Activated CD4-positive, alpha-beta memory T cell treated with anti-CD3 and anti-CD28 coated beads, Interleukin-2, amount 10 ng/mL, durations not matched to agents 7 days and 5 days (primary cell): ENCODE measurements at regions of chr22 and their contacts with region 1.

Region 1: GRCh38 chr22:25048659-25049647 is 96.4 kb downstream of the KIAA1671 start:
- DNase-seq: peak; percentile 82
- H3K4me3 Mint-ChIP-seq: no peak overlapping the region
- H3K27ac Mint-ChIP-seq: no peak overlapping the region
- H3K4me1 Mint-ChIP-seq: peaks cover 20% of the 10 kb centered on the region
- H3K27me3 Mint-ChIP-seq: peaks cover 3% of the 10 kb centered on the region

Region 2: GRCh38 chr22:24938741-24939341 is 110.1 kb before region 1 on chr22:
- CTCF ChIA-PET with region 1: interaction called, 63 read pairs
- POLR2A ChIA-PET with region 1: interaction called, 3 read pairs
- DNase-seq: peak; percentile 35
- H3K4me3 Mint-ChIP-seq: no peak overlapping the region
- H3K27ac Mint-ChIP-seq: no peak overlapping the region
- H3K4me1 Mint-ChIP-seq: no peaks in the 10 kb centered on the region
- H3K27me3 Mint-ChIP-seq: peaks cover 12% of the 10 kb centered on the region

Region 3: DNA sequence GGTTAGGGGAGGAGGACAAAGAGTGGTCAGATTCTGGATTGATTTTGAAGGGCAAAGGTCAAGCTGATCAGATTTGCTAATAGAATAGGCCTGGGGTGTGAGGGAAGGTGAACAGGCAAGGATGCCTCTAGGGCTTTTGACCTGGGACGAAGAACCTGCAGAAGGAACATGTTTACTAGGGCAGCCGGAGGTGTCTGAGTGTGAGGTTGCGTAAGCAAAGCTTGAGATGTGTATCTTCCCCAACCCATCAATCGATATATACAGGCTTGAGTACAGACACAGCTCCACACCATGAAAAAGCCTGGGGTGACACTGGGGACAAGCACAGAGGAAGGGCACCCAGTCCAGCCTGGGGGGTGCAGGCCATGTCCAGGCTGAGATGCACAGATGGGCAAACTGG is 103.5 kb before region 1 on chr22:
- CTCF ChIA-PET with region 1: interaction called, 95 read pairs
- POLR2A ChIA-PET with region 1: interaction called, 4 read pairs
- DNase-seq: no peak
- H3K4me3 Mint-ChIP-seq: no peak overlapping the region
- H3K27ac Mint-ChIP-seq: no peak overlapping the region
- H3K4me1 Mint-ChIP-seq: peaks cover 21% of the 10 kb centered on the region
- H3K27me3 Mint-ChIP-seq: peaks cover 51% of the 10 kb centered on the region

Region 4: GRCh38 chr22:24951942-24952836 is 96.8 kb before region 1 on chr22 and contains the start of gene KIAA1671:
- CTCF ChIA-PET with region 1: interaction called, 95 read pairs
- POLR2A ChIA-PET with region 1: interaction called, 9 read pairs
- DNase-seq: peak; percentile 92
- H3K4me3 Mint-ChIP-seq: peak within 1 kb of the TSS; percentile 90
- H3K27ac Mint-ChIP-seq: peak within 1 kb of the TSS; percentile 75
- H3K4me1 Mint-ChIP-seq: peaks cover 57% of the 10 kb centered on the region
- H3K27me3 Mint-ChIP-seq: peaks cover 68% of the 10 kb centered on the region
- total RNA-seq, gene KIAA1671: 35.0 to 35.5 TPM

Region 5: DNA sequence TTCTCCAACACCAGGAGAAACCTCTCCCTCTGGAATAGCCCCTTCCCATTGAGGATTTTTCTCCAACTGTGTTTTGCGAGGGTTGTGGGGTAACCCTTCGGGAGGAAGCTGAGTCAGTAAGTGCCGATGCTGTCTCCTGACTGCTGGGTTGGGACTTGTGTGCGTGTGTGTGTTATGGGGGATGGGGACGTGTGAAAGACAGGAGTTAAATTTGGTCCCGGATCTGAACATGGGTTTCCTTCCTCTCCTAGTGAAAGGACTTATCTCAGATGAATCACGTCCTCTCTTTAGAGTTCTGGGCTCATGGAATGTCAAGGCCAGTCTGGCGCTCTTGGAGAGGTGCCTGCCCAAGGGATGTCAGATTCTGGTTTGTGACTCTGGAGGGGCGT is 63.1 kb before region 1 on chr22:
- CTCF ChIA-PET with region 1: interaction called, 20 read pairs
- POLR2A ChIA-PET with region 1: no interaction called
- DNase-seq: peak; percentile 32
- H3K4me3 Mint-ChIP-seq: peak overlapping the region; percentile 36
- H3K27ac Mint-ChIP-seq: peak overlapping the region; percentile 70
- H3K4me1 Mint-ChIP-seq: peaks cover 62% of the 10 kb centered on the region
- H3K27me3 Mint-ChIP-seq: peaks cover 4% of the 10 kb centered on the region

Region 6: DNA sequence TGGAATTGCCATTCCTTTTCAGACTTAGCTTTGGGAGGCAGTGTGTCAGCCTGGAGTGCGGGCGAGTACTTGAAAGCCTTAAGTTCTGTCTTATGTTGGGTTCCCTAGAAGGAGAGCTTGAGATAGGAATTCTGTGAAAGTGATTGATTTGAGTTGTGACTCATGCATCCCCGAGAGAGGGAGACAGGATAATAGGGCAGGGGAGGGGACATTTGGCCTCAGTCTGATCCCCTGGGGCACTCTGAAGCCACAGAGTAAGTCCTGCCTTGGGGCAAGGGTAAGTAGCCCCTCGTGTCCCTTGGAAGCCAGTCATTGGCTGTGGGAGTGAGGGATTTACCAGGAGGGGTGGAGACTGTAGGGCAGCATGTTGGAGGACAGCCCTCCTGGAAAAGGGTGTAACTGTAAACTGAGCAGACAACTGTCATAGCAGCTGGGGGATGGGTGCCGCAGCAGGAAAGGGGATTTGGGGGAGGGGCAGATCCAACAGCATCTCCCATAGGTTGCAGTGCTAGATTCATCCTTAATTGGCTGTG is 52.5 kb before region 1 on chr22:
- CTCF ChIA-PET with region 1: interaction called, 21 read pairs
- POLR2A ChIA-PET with region 1: interaction called, 14 read pairs
- DNase-seq: no peak
- H3K4me3 Mint-ChIP-seq: no peak overlapping the region
- H3K27ac Mint-ChIP-seq: peak overlapping the region; percentile 88
- H3K4me1 Mint-ChIP-seq: peaks cover 69% of the 10 kb centered on the region
- H3K27me3 Mint-ChIP-seq: peaks cover 5% of the 10 kb centered on the region